ENCODE measurements at regions of chr17 and their contacts with region 1.

Region 1: GRCh38 chr17:4796553-4796921 is 573 bp downstream of the PSMB6 start:
- DNase-seq: peak; percentile 56
- H3K4me3 ChIP-seq: peak overlapping the region; percentile 75 to 96 (median 95)
- H3K27ac ChIP-seq: peak overlapping the region; percentile 58
- H3K4me1 ChIP-seq: peaks cover 2% of the 10 kb centered on the region
- H3K27me3 ChIP-seq: no peaks in the 10 kb centered on the region
- CTCF ChIP-seq: no peak
- POLR2A ChIP-seq: no peak

Region 2: DNA sequence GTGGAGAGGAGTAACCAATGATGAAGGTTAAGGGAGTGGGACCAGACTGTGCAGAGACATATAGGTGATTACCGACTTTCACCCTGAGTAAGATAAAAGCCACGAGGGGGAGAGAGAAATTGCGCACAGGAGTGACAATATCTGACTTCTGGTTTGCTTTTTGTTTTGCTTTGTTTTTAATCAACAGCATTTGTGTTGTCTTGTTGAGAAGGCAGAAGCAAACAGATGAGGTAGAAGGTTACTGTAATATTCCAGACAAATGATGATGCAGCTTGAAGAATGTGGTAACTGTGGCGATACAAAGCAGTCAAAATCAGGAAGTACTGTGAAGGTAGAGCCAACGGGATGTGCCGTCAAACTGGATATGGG is 100.1 kb before region 1 on chr17:
- CTCF ChIA-PET with region 1: no interaction called
- POLR2A ChIA-PET with region 1: no interaction called
- dilution Hi-C with region 1: no loop called
- intact Hi-C with region 1: no loop called
- DNase-seq: no peak
- H3K4me3 ChIP-seq: no peak overlapping the region
- H3K27ac ChIP-seq: no peak overlapping the region
- H3K4me1 ChIP-seq: no peaks in the 10 kb centered on the region
- H3K27me3 ChIP-seq: no peaks in the 10 kb centered on the region
- CTCF ChIP-seq: no peak
- POLR2A ChIP-seq: no peak

Region 3: DNA sequence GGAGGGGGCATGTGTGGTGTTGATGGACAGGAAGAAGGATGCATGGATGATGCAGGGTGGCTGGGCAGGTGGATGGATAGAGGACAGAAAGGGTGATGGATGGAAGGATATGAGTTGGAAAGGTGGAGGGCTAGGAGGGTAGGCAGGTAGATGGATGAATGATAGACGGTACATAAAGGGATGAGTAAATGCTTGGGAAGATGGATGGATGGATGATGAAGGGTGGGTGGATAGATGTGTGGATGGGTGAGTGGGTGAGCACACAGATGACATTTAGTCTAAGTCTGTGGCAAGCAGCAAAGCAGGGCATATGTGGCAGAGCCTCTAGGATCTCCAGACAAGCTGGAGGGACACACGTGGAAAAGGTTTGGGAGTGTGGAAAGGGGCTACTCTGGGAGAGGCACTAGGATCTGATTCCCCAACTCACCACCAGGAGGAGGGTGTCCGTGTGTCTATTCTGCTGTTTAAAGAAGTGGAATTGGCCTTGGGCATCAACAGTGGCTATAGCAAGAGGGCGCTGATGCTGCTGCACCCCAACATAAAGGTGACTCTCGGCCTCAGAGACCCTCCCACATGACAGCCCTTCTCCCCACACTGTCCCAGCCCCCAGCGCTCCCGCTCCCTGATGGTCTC is 18.6 kb after region 1 on chr17:
- CTCF ChIA-PET with region 1: no interaction called
- POLR2A ChIA-PET with region 1: no interaction called
- dilution Hi-C with region 1: no loop called
- intact Hi-C with region 1: no loop called
- DNase-seq: no peak
- H3K4me3 ChIP-seq: no peak overlapping the region
- H3K27ac ChIP-seq: no peak overlapping the region
- H3K4me1 ChIP-seq: no peaks in the 10 kb centered on the region
- H3K27me3 ChIP-seq: no peaks in the 10 kb centered on the region
- CTCF ChIP-seq: peak; percentile 42 to 54
- POLR2A ChIP-seq: no peak

Region 4: GRCh38 chr17:4833178-4833940 is 36.8 kb after region 1 on chr17 and contains the start of gene MINK1:
- CTCF ChIA-PET with region 1: no interaction called
- POLR2A ChIA-PET with region 1: no interaction called
- dilution Hi-C with region 1: no loop called
- intact Hi-C with region 1: no loop called
- DNase-seq: peak; percentile 96
- H3K4me3 ChIP-seq: peak within 1 kb of the TSS; percentile 67 to 79 (median 77)
- H3K27ac ChIP-seq: peak within 1 kb of the TSS; percentile 73
- H3K4me1 ChIP-seq: peaks cover 12% of the 10 kb centered on the region
- H3K27me3 ChIP-seq: no peaks in the 10 kb centered on the region
- CTCF ChIP-seq: no peak
- POLR2A ChIP-seq: peak; percentile 79
- total RNA-seq, gene MINK1: 87.5 and 89.4 TPM in 2 replicates

Region 5: DNA sequence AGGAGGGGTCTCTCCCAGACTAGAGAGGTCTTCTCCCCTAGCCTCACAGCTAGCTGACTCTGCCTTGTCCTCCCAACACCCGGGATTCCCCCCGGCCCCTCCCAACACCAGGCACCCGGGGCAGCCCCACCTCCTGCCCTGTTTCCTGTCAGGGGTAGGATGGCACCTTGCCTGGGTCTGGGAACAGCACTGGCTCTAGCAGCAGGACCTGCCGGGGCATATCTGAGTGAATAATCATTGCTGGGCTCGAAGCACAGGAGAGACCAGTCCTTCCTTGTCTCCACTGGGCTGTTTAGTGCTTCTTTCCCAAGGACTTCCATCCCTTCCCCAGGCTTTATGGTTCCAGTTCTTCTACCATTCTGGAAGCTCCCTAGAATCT is 62.3 kb after region 1 on chr17:
- CTCF ChIA-PET with region 1: no interaction called
- POLR2A ChIA-PET with region 1: interaction called, 5 read pairs
- dilution Hi-C with region 1: no loop called
- intact Hi-C with region 1: loop called (anchors 2 kb)
- DNase-seq: peak; percentile 69
- H3K4me3 ChIP-seq: peak overlapping the region in 1 of 3 experiments; percentile 48
- H3K27ac ChIP-seq: peak overlapping the region; percentile 79
- H3K4me1 ChIP-seq: peaks cover 47% of the 10 kb centered on the region
- H3K27me3 ChIP-seq: no peaks in the 10 kb centered on the region
- CTCF ChIP-seq: no peak
- POLR2A ChIP-seq: peak; percentile 40